Ovary (tissue), 10 donors: ENCODE measurements at regions of chr3 and their contacts with region 1.

Region 1: DNA sequence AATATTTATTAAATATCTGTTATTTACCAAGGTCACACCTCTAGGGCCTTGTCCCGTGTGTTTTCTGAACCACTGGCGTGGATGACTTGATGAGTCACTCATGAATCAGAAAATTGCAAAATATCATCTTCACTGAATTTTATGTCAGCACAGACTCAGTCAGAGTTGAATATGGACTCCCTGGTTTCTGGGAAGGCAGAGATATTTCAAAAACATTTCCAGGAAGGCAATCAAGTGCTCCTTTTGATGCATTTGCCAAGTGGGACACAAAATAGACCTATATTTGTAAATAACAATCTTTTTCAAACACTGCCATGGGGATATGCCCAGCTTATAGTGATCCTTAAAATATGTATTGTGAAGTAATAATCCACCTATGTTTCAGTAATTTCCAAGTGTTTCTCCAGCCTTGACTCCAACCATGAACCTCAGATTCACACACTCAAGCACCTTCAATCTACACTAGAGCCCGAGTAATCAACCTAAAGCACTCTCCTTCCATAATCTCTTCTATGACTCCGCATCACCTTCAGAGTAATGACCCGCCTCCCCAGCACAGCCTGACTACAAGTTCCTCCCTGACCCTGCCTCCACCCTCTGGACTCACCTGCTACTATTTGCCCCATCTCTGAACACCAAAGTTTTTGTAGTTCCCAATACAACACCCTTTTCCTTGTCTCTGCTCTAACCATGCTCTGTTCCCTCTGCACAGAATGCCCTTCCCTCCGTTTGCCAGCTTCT is 24.3 kb downstream of the DPH3 start:
- DNase-seq: peak in 1 of 5 donors; percentile 55
- H3K4me3 ChIP-seq: no peak overlapping the region
- H3K27ac ChIP-seq: peak overlapping the region in 1 of 2 donors; percentile 67
- H3K4me1 ChIP-seq: peaks cover 15% of the 10 kb centered on the region
- H3K27me3 ChIP-seq: no peaks in the 10 kb centered on the region
- CTCF ChIP-seq: no peak
- EP300 ChIP-seq: peak; percentile 84
- POLR2A ChIP-seq: no peak

Region 2: DNA sequence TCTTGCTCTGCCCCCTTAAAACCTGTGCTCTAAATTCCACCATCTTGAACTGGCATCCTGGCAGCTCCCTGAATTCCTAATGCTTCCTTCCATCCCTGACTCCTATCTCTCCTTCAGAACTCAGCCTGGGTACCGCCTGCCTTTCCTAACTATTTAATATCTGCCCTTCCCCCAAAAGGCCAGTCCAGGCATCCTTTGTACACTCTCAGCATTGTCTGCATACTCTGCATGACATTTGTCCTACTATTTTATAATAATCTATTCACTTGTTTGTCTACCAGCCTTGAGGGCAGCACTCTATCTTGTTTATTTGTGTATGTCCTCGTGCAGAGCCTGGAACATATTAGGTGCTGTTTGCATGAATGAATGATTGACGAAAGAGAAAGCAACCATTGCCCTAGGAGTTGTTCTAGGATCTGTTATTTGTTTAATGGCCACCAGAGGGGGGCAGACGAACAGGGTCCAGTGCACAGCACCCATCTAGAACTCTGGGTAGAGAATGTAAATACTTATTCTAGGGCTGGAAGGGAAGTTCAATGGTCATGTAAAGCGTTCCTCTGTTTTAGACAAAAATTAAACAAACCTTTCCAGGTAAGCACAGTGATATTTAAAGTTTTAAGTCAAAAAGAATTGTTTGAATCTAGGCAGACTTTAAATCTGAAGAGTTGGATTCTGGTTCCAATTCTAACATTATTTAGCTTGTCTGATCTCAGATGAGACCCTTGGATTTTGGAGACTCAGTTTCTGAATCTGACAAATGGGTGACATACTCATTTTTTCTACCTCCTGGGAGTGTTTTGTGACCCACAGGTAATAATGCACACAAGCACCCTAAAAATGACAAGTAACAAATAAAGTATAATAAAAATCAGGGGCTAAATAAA is 191.8 kb before region 1 on chr3:
- intact Hi-C with region 1: loop called (anchors 5 kb)
- DNase-seq: peak in 2 of 5 donors; percentile 32 to 70
- H3K4me3 ChIP-seq: no peak overlapping the region
- H3K27ac ChIP-seq: no peak overlapping the region
- H3K4me1 ChIP-seq: peaks cover 5% of the 10 kb centered on the region
- H3K27me3 ChIP-seq: no peaks in the 10 kb centered on the region
- CTCF ChIP-seq: peak; percentile 70 to 87 (median 80)
- EP300 ChIP-seq: no peak
- POLR2A ChIP-seq: no peak

Region 3: DNA sequence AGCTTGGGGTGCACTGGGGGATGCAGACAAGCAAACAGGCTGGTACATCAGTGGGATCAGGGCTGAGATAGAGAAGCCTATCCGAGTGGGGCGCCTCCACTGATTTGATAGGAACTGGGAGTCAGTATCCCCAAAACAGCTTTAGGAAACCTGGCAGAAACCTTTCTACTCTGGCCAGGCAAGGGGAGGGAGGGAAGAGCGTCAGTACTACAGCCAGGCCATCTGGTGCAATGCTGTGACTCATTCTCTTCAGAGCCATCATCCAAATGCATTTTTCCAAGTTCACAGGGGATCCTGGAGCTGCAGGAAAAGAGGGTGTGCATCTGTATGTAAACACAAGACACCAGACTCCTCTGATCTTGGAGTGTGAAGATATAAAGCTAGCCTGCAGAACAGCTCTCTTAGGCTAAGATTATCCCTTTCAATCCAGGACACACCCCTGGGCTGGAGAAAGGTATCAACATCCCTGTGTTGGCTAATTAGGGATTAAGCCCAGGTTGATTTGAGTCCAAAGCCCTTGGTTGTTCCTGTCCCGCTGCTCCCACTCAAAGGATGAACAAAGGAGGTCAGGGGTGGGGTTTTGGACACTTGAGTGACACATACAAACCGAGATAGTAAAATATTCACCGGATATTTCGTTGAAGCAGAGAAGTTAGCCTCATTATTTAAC is 56.7 kb before region 1 on chr3:
- intact Hi-C with region 1: loop called in 1 of 4 experiments (anchors 5 kb)
- DNase-seq: peak in 2 of 5 donors; percentile 47 to 63
- H3K4me3 ChIP-seq: no peak overlapping the region
- H3K27ac ChIP-seq: peak overlapping the region in 1 of 2 donors; percentile 53
- H3K4me1 ChIP-seq: no peaks in the 10 kb centered on the region
- H3K27me3 ChIP-seq: no peaks in the 10 kb centered on the region
- CTCF ChIP-seq: no peak
- EP300 ChIP-seq: no peak
- POLR2A ChIP-seq: no peak